CD8-positive, alpha-beta T cell (primary cell): ENCODE measurements at regions of chr3 and their contacts with region 1.

Region 1: DNA sequence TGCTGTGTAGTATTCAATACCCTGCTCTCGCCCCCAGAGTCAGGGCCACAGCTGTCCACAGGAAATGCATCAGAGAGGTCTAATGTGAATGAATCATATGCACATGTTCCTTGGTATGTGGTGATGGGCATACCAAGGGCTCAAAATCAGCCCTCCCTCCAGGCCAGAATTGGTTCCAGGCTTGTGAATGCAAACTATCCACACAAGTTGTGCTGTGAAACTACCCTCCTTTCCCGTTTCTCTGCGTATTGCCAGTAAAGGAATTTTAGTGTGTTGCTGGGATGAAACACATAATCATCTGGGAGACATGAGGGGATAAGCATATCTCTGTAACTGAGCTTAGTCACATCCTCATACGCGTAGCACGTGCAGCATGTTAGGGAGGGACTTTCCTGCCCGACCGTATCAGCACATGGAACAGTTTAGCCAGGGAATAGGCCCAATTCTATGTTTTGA is 9.2 kb upstream of the MME start:
- DNase-seq: no peak
- ATAC-seq: no peak
- H3K4me3 ChIP-seq: no peak overlapping the region
- H3K4me3 Mint-ChIP-seq: no peak overlapping the region
- H3K27ac ChIP-seq: no peak overlapping the region
- H3K27ac Mint-ChIP-seq: no peak overlapping the region
- H3K4me1 ChIP-seq: no peaks in the 10 kb centered on the region
- H3K4me1 Mint-ChIP-seq: no peaks in the 10 kb centered on the region
- H3K27me3 ChIP-seq: no peaks in the 10 kb centered on the region
- H3K27me3 Mint-ChIP-seq: no peaks in the 10 kb centered on the region
- CTCF ChIP-seq: no peak

Region 2: DNA sequence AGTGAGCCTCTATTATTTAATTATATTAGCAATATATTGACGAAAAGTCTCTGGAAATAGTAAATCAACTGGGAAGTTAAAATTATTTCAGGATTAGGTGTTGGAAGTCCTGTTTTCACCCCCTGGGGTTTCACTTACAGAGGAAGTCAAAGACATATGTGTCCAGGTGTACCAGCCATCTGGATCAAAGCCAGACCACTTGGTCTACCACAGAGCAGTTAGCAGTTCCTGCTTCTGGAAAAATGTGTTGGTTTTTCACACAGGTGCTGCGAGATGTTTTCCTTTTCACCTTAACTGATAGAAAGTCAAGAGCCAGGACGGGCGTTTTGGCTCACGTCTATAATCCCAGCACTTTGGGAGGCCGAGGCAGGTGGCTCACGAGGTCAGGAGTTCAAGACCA is 22.3 kb after region 1 on chr3:
- CTCF ChIA-PET with region 1: no interaction called
- POLR2A ChIA-PET with region 1: no interaction called
- intact Hi-C with region 1: no loop called
- DNase-seq: no peak
- ATAC-seq: no peak
- H3K4me3 ChIP-seq: no peak overlapping the region
- H3K4me3 Mint-ChIP-seq: no peak overlapping the region
- H3K27ac ChIP-seq: no peak overlapping the region
- H3K27ac Mint-ChIP-seq: no peak overlapping the region
- H3K4me1 ChIP-seq: no peaks in the 10 kb centered on the region
- H3K4me1 Mint-ChIP-seq: no peaks in the 10 kb centered on the region
- H3K27me3 ChIP-seq: no peaks in the 10 kb centered on the region
- H3K27me3 Mint-ChIP-seq: no peaks in the 10 kb centered on the region
- CTCF ChIP-seq: no peak

Region 3: GRCh38 chr3:155110976-155111901 is 40.3 kb after region 1 on chr3:
- CTCF ChIA-PET with region 1: no interaction called
- POLR2A ChIA-PET with region 1: no interaction called
- intact Hi-C with region 1: loop called in 1 of 2 experiments (anchors 1 kb)
- DNase-seq: peak in 1 of 9 experiments; percentile 48
- ATAC-seq: peak; percentile 46
- H3K4me3 ChIP-seq: no peak overlapping the region
- H3K4me3 Mint-ChIP-seq: no peak overlapping the region
- H3K27ac ChIP-seq: no peak overlapping the region
- H3K27ac Mint-ChIP-seq: no peak overlapping the region
- H3K4me1 ChIP-seq: no peaks in the 10 kb centered on the region
- H3K4me1 Mint-ChIP-seq: peaks cover 11% of the 10 kb centered on the region
- H3K27me3 ChIP-seq: no peaks in the 10 kb centered on the region
- H3K27me3 Mint-ChIP-seq: no peaks in the 10 kb centered on the region
- CTCF ChIP-seq: no peak

Region 4: GRCh38 chr3:155131104-155131503 is 60.1 kb after region 1 on chr3:
- CTCF ChIA-PET with region 1: no interaction called
- POLR2A ChIA-PET with region 1: no interaction called
- intact Hi-C with region 1: no loop called
- DNase-seq: no peak
- ATAC-seq: no peak
- H3K4me3 ChIP-seq: no peak overlapping the region
- H3K4me3 Mint-ChIP-seq: no peak overlapping the region
- H3K27ac ChIP-seq: no peak overlapping the region
- H3K27ac Mint-ChIP-seq: no peak overlapping the region
- H3K4me1 ChIP-seq: no peaks in the 10 kb centered on the region
- H3K4me1 Mint-ChIP-seq: no peaks in the 10 kb centered on the region
- H3K27me3 ChIP-seq: no peaks in the 10 kb centered on the region
- H3K27me3 Mint-ChIP-seq: no peaks in the 10 kb centered on the region
- CTCF ChIP-seq: no peak

Region 5: DNA sequence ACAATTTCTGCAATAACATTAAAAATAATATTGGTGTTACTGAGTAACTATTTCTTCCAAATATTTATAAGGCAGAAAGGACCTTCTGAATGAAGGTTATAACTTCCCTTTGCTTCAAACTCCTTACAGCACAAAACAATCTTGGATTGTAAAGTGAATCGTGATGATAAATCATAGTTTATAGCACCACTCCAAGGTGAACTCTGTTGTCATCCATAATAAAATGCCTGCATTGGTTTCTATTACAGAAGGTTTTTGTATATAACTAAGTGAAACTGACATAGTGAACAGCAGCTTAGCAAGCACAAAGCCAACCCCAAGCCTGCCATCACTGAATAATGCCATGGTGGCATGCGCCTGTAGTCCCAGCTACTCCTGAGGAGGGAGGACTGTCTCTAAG is 95.5 kb after region 1 on chr3:
- CTCF ChIA-PET with region 1: no interaction called
- POLR2A ChIA-PET with region 1: no interaction called
- intact Hi-C with region 1: no loop called
- DNase-seq: no peak
- ATAC-seq: no peak
- H3K4me3 ChIP-seq: no peak overlapping the region
- H3K4me3 Mint-ChIP-seq: no peak overlapping the region
- H3K27ac ChIP-seq: no peak overlapping the region
- H3K27ac Mint-ChIP-seq: no peak overlapping the region
- H3K4me1 ChIP-seq: no peaks in the 10 kb centered on the region
- H3K4me1 Mint-ChIP-seq: no peaks in the 10 kb centered on the region
- H3K27me3 ChIP-seq: no peaks in the 10 kb centered on the region
- H3K27me3 Mint-ChIP-seq: no peaks in the 10 kb centered on the region
- CTCF ChIP-seq: no peak